Naive thymus-derived CD4-positive, alpha-beta T cell (primary cell): ENCODE measurements at regions of chr14 and their contacts with region 1.

Region 1: GRCh38 chr14:105300792-105301533 is at the start of gene BRF1:
- DNase-seq: peak; percentile 94 to 100 (median 99)
- ATAC-seq: peak; percentile 93
- H3K4me3 ChIP-seq: peak within 1 kb of the TSS; percentile 73
- H3K4me3 Mint-ChIP-seq: peak within 1 kb of the TSS; percentile 75 to 95 (median 90)
- H3K27ac ChIP-seq: peak within 1 kb of the TSS; percentile 94
- H3K27ac Mint-ChIP-seq: peak within 1 kb of the TSS; percentile 86 to 97 (median 94)
- H3K4me1 ChIP-seq: peaks cover 0 to 22% of the 10 kb centered on the region in 2 donors
- H3K4me1 Mint-ChIP-seq: peaks cover 34 to 52% (median 40%) of the 10 kb centered on the region in 7 donors
- H3K27me3 ChIP-seq: no peaks in the 10 kb centered on the region
- H3K27me3 Mint-ChIP-seq: no peaks in the 10 kb centered on the region
- total RNA-seq, gene BRF1: 49.8 to 75.7 (median 61.4) TPM

Region 2: DNA sequence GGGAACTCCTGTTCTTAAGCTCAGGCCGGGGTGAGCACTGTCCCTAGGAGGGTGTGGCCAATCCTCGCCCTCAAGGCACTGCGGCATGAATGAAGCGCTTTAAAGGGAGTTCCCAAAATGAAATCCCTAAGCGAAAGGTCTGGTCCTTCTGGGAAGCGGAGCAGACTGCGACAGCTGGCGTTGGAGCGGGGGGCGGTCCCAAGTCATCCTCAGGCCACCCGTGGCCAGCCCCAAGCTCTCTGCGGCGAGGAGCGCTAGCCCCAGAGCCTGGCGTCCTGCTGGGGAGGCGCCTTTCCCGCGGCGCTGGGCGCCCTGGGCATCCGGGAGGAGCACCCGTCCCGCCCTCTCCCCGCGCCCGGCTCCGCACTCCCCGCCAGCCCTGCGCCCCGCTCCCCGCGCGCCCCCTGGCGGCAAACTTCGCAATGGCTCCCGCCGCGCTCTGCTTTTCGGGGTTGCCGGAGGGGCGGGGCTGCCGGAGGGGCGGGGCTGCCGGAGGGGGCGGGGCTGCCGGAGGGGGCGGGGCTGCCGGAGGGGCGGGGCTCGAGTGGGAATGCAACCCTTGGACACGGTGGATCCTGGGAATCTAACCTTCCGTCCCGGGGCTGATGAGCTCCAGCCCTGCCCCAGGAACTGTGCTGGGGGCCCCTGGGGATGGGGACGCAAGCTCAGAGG is 474.6 kb before region 1 on chr14:
- CTCF ChIA-PET with region 1: no interaction called
- POLR2A ChIA-PET with region 1: no interaction called
- intact Hi-C with region 1: loop called in 1 of 2 experiments (anchors 1 kb)
- DNase-seq: peak; percentile 84 to 100 (median 93)
- ATAC-seq: peak; percentile 96
- H3K4me3 ChIP-seq: peak overlapping the region; percentile 71
- H3K4me3 Mint-ChIP-seq: peak overlapping the region; percentile 64 to 91 (median 84)
- H3K27ac ChIP-seq: peak overlapping the region; percentile 46
- H3K27ac Mint-ChIP-seq: peak overlapping the region in 4 of 9 donors; percentile 46 to 80 (median 73)
- H3K4me1 ChIP-seq: peaks cover 10 to 12% of the 10 kb centered on the region in 2 donors
- H3K4me1 Mint-ChIP-seq: peaks cover 12 to 26% (median 15%) of the 10 kb centered on the region in 7 donors
- H3K27me3 ChIP-seq: no peaks in the 10 kb centered on the region
- H3K27me3 Mint-ChIP-seq: peaks cover 0 to 33% (median 0%) of the 10 kb centered on the region in 5 donors

Region 3: DNA sequence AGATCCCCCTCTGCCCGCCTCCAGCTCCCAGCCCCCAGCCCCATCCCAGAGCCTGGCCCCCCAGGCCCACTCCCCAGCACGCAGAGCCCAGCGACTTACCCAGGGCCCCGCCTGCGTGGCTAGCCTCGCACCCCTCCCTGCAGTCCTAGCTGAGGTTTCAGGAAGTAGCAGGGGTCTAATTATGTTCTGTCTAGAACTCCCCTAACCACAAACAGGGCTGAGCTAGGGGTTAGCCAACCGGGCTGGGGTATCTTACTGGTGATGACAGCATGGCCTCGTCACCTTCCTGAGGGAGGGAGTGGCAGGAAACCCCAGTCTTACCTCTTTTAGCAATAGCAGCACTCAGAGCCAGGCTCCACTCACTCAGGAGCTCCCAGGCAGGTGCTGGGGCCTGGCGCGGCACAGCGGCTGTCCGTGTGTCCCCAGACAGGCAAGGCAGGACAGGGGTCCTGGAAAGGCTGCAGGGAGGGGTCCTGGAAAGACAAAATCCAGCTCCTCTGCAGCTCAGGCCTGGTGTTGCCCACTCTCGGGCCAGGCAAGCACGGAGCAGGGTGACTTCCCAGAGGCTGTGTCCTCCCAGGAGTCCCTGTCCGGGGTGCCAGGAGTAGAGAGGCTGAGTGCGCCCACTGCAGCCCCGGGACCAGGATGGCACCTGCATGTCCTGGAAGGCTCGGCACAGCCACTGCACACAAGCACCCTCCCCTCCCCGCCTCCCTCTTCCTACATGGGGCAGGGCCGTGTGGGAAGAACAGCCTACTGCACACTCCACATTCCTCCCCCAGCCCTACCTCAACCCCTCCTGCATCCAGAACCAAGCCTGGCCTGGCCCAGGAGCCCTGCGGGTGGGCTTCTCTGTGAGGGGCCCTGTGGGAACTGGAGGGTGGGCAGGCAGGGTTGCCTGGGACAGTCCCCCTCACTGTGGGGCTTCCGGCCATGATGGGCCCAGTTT is 235.4 kb before region 1 on chr14 and contains the start of gene GPR132:
- CTCF ChIA-PET with region 1: no interaction called
- POLR2A ChIA-PET with region 1: interaction called, 7 read pairs
- intact Hi-C with region 1: loop called in 1 of 2 experiments (anchors 2 kb)
- DNase-seq: peak; percentile 73 to 99 (median 96)
- ATAC-seq: peak; percentile 93
- H3K4me3 ChIP-seq: peak within 1 kb of the TSS; percentile 97
- H3K4me3 Mint-ChIP-seq: peak within 1 kb of the TSS; percentile 82 to 96 (median 90)
- H3K27ac ChIP-seq: peak within 1 kb of the TSS; percentile 96
- H3K27ac Mint-ChIP-seq: peak within 1 kb of the TSS; percentile 93 to 99 (median 98)
- H3K4me1 ChIP-seq: peaks cover 66 to 80% of the 10 kb centered on the region in 2 donors
- H3K4me1 Mint-ChIP-seq: peaks cover 36 to 85% (median 58%) of the 10 kb centered on the region in 7 donors
- H3K27me3 ChIP-seq: no peaks in the 10 kb centered on the region
- H3K27me3 Mint-ChIP-seq: no peaks in the 10 kb centered on the region
- total RNA-seq, gene GPR132: 37.8 to 58.7 (median 45.2) TPM

Region 4: DNA sequence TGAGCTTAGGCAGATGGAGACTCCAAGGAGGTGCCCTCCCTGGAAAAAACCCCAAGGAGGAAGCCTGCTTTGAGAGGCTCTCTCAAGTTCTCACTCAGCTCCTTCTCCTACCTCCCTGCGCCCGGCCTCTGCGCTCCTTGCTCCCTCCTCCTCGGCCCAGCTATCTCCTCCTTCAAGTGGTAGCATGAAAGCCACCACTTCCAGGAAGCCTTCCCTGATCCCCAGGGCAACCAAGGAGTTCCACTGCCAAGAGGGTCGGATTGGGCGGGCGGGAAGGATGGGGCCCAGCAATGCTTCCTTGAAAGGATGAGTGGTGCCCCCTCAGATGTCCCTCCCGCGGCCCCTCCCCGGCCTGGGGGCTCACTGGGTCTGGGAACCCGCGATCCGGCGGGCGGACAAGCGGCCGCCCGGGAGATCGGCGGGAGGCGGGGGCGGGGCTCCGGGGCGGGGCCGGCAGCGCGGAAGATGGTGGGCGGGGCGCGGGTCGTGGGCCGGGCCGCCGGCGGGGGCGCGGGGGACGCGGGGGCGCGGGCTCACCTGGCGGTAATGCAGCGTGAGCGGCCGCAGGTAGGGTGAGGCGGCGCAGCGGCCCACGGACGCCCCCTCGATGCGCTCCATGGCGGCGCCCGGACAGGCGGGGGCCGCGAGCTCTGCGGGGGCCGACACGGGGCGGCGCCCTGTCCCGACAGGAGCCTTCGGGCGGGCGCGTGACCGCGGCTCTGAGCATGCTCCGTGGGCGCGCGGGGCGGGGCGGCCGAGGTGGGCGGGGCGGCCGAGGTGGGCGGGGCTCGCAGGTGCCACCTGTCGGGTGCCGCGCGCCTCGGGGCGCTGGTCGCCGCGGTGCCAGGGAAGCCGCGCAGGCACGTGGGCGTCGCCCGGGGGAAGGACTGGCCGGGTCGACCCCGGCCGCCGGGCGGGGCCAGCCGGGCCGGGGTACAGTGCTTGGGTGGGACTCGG is 120.1 kb before region 1 on chr14 and contains the start of gene NUDT14:
- CTCF ChIA-PET with region 1: no interaction called
- POLR2A ChIA-PET with region 1: interaction called, 4 read pairs
- intact Hi-C with region 1: loop called (anchors 1 to 5 kb)
- DNase-seq: peak; percentile 69 to 88 (median 82)
- ATAC-seq: peak; percentile 94
- H3K4me3 ChIP-seq: peak within 1 kb of the TSS; percentile 52
- H3K4me3 Mint-ChIP-seq: peak within 1 kb of the TSS; percentile 68 to 86 (median 77)
- H3K27ac ChIP-seq: peak within 1 kb of the TSS; percentile 53
- H3K27ac Mint-ChIP-seq: peak within 1 kb of the TSS in 7 of 9 donors; percentile 10 to 76 (median 64)
- H3K4me1 ChIP-seq: peaks cover 4 to 12% of the 10 kb centered on the region in 2 donors
- H3K4me1 Mint-ChIP-seq: peaks cover 0 to 23% (median 15%) of the 10 kb centered on the region in 7 donors
- H3K27me3 ChIP-seq: no peaks in the 10 kb centered on the region
- H3K27me3 Mint-ChIP-seq: peaks cover 0 to 4% (median 0%) of the 10 kb centered on the region in 5 donors
- total RNA-seq, gene NUDT14: 17.3 to 29.6 (median 20.6) TPM

Region 5: DNA sequence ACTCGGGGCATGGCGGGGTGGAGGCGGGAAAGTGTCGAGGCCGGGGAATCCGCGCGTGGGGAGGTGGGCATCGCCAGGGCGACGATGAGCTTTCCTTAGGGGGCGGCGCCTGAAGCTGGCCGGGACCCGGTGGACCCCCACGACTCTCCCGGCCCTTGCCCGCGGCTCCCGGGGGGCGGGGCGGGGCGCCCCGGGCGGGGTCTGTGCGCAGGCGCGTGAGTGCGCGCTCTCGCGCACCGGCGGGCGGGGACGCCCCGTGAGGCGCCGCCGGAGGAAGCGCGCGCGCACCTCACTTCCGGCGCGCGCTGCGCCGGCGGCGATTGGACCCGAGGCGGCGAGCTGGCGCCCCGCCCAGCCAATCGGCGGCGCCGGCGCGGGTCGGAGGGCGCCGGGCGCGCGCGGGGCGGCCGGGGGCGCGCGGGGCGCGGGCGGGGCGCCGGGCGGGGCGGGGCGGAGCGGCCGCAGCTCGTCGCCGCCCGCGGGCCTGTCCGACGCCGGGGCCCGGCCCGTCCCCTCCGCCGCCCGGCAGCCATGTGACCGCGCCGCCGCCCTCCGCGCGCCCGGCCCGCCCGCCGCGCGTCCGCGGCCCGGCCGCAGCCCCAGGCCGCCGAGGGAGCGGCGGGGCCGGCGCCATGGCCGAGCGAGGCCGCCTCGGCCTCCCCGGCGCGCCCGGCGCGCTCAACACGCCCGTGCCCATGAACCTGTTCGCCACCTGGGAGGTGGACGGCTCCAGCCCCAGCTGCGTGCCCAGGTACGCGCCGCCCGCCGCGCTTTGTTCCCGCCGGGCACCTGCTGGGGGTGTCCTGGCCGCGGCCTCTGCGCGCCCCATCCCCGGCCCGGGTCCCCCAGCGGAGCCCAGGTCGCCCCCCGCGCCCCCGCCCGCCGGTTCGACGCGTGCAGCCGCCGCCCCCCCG is 13.6 kb after region 1 on chr14 and contains the start of gene PACS2:
- CTCF ChIA-PET with region 1: interaction called, 8 read pairs
- POLR2A ChIA-PET with region 1: interaction called, 58 read pairs
- intact Hi-C with region 1: loop called (anchors 1 kb)
- DNase-seq: peak; percentile 64 to 90 (median 86)
- ATAC-seq: peak; percentile 89
- H3K4me3 ChIP-seq: peak within 1 kb of the TSS; percentile 57
- H3K4me3 Mint-ChIP-seq: peak within 1 kb of the TSS; percentile 80 to 98 (median 89)
- H3K27ac ChIP-seq: peak within 1 kb of the TSS; percentile 68
- H3K27ac Mint-ChIP-seq: peak within 1 kb of the TSS; percentile 74 to 95 (median 89)
- H3K4me1 ChIP-seq: peaks cover 13 to 21% of the 10 kb centered on the region in 2 donors
- H3K4me1 Mint-ChIP-seq: peaks cover 9 to 35% (median 23%) of the 10 kb centered on the region in 7 donors
- H3K27me3 ChIP-seq: no peaks in the 10 kb centered on the region
- H3K27me3 Mint-ChIP-seq: peaks cover 0 to 9% (median 0%) of the 10 kb centered on the region in 5 donors
- total RNA-seq, gene PACS2: 33.9 to 75.4 (median 72.3) TPM

Region 6: GRCh38 chr14:105414456-105415371 is 113.8 kb after region 1 on chr14:
- CTCF ChIA-PET with region 1: no interaction called
- POLR2A ChIA-PET with region 1: no interaction called
- intact Hi-C with region 1: loop called in 1 of 2 experiments (anchors 5 kb)
- DNase-seq: peak; percentile 47 to 82 (median 66)
- ATAC-seq: peak; percentile 85
- H3K4me3 ChIP-seq: peak overlapping the region; percentile 61
- H3K4me3 Mint-ChIP-seq: peak overlapping the region; percentile 66 to 88 (median 76)
- H3K27ac ChIP-seq: peak overlapping the region; percentile 58
- H3K27ac Mint-ChIP-seq: peak overlapping the region in 4 of 9 donors; percentile 52 to 86 (median 78)
- H3K4me1 ChIP-seq: peaks cover 9 to 15% of the 10 kb centered on the region in 2 donors
- H3K4me1 Mint-ChIP-seq: peaks cover 6 to 25% (median 16%) of the 10 kb centered on the region in 7 donors
- H3K27me3 ChIP-seq: peaks cover 0 to 12% of the 10 kb centered on the region in 2 donors
- H3K27me3 Mint-ChIP-seq: peaks cover 0 to 31% (median 6%) of the 10 kb centered on the region in 5 donors

Region 7: DNA sequence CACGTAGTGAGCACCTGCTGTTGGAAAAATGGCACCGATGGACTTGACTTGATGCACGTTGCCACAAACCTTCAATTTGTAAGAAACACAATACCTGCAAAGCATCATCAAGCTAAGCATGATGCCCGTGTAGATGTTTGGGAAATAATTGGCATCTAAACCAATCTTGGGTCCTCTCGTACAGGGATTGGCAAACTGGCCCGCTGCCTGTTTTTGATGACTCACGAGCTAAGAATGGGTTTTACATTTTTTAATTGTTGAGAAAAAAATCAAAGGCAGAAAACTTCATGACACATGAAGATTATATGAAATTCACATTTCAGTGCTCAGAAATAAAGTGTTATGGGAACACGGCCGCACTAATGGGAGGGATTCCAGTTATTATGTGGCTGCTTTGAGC is 129.6 kb after region 1 on chr14:
- CTCF ChIA-PET with region 1: no interaction called
- POLR2A ChIA-PET with region 1: no interaction called
- intact Hi-C with region 1: no loop called
- DNase-seq: no peak
- ATAC-seq: no peak
- H3K4me3 ChIP-seq: no peak overlapping the region
- H3K4me3 Mint-ChIP-seq: no peak overlapping the region
- H3K27ac ChIP-seq: no peak overlapping the region
- H3K27ac Mint-ChIP-seq: peak overlapping the region in 1 of 9 donors; percentile 14
- H3K4me1 ChIP-seq: no peaks in the 10 kb centered on the region
- H3K4me1 Mint-ChIP-seq: peaks cover 4 to 25% (median 15%) of the 10 kb centered on the region in 7 donors
- H3K27me3 ChIP-seq: no peaks in the 10 kb centered on the region
- H3K27me3 Mint-ChIP-seq: no peaks in the 10 kb centered on the region

Region 8: GRCh38 chr14:105527661-105528581 is 227.0 kb after region 1 on chr14:
- CTCF ChIA-PET with region 1: no interaction called
- POLR2A ChIA-PET with region 1: no interaction called
- intact Hi-C with region 1: loop called in 1 of 2 experiments (anchors 5 kb)
- DNase-seq: peak; percentile 65 to 86 (median 78)
- ATAC-seq: peak; percentile 89
- H3K4me3 ChIP-seq: peak overlapping the region; percentile 54
- H3K4me3 Mint-ChIP-seq: peak overlapping the region; percentile 42 to 89 (median 72)
- H3K27ac ChIP-seq: no peak overlapping the region
- H3K27ac Mint-ChIP-seq: peak overlapping the region in 2 of 9 donors; percentile 32 to 49
- H3K4me1 ChIP-seq: peaks cover 9 to 14% of the 10 kb centered on the region in 2 donors
- H3K4me1 Mint-ChIP-seq: peaks cover 0 to 24% (median 16%) of the 10 kb centered on the region in 7 donors
- H3K27me3 ChIP-seq: peaks cover 0 to 4% of the 10 kb centered on the region in 2 donors
- H3K27me3 Mint-ChIP-seq: peaks cover 0 to 43% (median 0%) of the 10 kb centered on the region in 5 donors